ENCODE measurements at regions of chr13 and their contacts with region 1.

Region 1: DNA sequence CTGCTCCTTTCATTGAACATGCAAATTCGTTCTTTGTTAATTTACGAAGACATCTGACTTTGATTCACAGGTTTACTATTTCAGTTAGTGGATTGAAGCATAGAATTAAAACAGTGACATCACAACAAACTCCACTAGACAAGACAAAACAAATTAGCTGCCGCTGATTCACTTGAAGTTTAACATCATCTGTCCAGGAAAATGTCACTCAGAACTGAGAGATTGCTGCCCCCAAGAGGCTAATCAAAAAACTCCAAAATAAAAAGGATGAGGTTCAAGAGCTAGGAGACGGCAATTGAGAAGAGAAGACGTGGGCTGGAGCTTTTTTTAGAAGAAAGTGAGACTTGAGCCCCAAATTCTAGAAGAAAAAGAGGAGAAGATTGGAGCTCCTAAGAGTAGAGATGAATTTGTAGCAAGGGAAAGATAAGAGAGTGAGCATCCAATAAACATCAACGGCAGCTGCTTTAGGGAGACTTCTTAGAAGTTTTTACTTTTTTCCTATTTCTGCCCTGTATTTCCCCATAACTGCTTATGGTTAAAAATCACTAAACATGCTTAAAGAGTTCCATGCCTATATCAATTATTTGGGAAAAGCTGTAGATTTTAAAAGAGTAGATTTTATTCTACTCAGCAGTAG is 40.8 kb upstream of the TPP2 start:
- DNase-seq: peak; percentile 47
- H3K4me3 ChIP-seq: no peak overlapping the region
- H3K27ac ChIP-seq: peak overlapping the region in 1 of 2 experiments; percentile 55; a peak in 2 of 4 replicates
- H3K4me1 ChIP-seq: peaks cover 0 to 2% of the 10 kb centered on the region in 2 experiments; a peak in 2 of 4 replicates
- H3K27me3 ChIP-seq: no peaks in the 10 kb centered on the region
- CTCF ChIP-seq: peak; percentile 64
- EP300 ChIP-seq: no peak
- RAD21 ChIP-seq: peak; percentile 92

Region 2: DNA sequence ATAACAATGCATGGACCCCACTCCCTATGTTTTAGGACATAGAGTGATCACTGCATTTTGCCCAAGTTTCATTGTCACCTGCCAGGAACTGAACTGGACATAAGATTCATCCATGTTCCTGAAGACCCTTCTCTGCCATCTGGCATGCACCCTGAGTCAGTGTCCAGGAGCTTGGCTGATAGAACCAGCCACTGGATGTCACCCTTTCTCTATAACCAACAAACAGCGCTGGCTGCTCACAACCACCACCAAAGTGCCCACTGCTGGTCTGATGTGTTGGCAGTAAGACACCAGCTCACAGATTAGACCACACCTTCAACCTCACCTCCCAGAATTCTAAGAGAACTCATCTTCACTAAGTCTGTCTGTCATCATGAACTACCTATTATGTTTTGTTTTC is 770.2 kb before region 1 on chr13:
- CTCF ChIA-PET with region 1: interaction called, 10 read pairs
- POLR2A ChIA-PET with region 1: no interaction called
- DNase-seq: peak; percentile 22
- H3K4me3 ChIP-seq: no peak overlapping the region
- H3K27ac ChIP-seq: no peak overlapping the region
- H3K4me1 ChIP-seq: peaks cover 0 to 17% of the 10 kb centered on the region in 2 experiments; a peak in 2 of 4 replicates
- H3K27me3 ChIP-seq: no peaks in the 10 kb centered on the region
- CTCF ChIP-seq: peak; percentile 56
- EP300 ChIP-seq: no peak
- RAD21 ChIP-seq: peak; percentile 75

Region 3: DNA sequence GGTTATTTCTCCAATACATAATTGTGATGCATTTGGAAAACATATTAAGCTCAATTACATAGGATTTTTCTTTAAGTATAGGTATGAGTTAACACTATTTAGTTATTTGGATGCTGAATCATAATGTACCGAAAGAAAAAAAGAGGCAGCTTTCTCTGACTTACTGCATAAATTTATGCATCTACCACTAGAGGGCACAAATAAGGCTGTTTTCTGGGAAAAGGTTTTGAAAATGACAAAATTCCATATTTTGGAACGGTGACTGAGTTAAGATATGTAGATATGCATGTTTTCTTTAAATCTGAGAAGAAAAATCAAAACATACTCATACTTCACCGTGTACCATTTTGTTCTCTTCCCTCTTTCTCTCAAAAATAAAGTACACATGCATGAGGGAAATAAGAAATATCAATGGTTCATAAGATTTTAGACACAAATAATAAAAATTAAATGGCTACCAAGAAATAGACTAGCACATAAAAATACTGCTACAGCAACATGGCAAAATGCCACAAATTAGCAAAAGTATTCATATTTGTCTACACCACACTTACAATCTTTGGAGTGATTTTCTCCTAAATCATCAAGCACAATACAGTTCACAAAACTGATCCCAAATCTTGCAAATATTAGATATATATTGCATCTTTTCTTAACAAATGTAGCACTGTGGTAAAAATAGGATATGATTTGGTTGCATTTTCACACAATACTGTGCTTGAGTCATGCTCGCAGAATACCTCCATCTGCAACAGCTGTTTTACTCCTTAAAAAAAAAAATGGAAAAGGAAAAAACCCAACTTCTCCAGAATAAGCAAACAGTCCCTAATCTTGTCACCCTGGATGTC is 414.2 kb before region 1 on chr13:
- CTCF ChIA-PET with region 1: interaction called, 29 read pairs
- POLR2A ChIA-PET with region 1: no interaction called
- DNase-seq: no peak
- H3K4me3 ChIP-seq: no peak overlapping the region
- H3K27ac ChIP-seq: peak overlapping the region in 1 of 2 experiments; percentile 99; a peak in 2 of 4 replicates
- H3K4me1 ChIP-seq: peaks cover 0 to 40% of the 10 kb centered on the region in 2 experiments; a peak in 3 of 4 replicates
- H3K27me3 ChIP-seq: no peaks in the 10 kb centered on the region
- CTCF ChIP-seq: peak; percentile 92
- EP300 ChIP-seq: no peak
- RAD21 ChIP-seq: peak; percentile 74

Region 4: GRCh38 chr13:102394158-102395053 is 161.6 kb before region 1 on chr13:
- CTCF ChIA-PET with region 1: interaction called, 67 read pairs
- POLR2A ChIA-PET with region 1: interaction called, 19 read pairs
- DNase-seq: peak; percentile 95
- H3K4me3 ChIP-seq: peak overlapping the region; percentile 75 to 86
- H3K27ac ChIP-seq: peak overlapping the region; percentile 25 to 96; a peak in 3 of 4 replicates
- H3K4me1 ChIP-seq: peaks cover 0 to 41% of the 10 kb centered on the region in 2 experiments; a peak in 2 of 4 replicates
- H3K27me3 ChIP-seq: no peaks in the 10 kb centered on the region
- CTCF ChIP-seq: peak; percentile 46
- EP300 ChIP-seq: peak; percentile 3 to 24; a peak in 1 of 4 replicates
- RAD21 ChIP-seq: peak; percentile 64

Region 5: GRCh38 chr13:102402290-102402689 is 153.7 kb before region 1 on chr13:
- CTCF ChIA-PET with region 1: interaction called, 67 read pairs
- POLR2A ChIA-PET with region 1: interaction called, 19 read pairs
- DNase-seq: peak; percentile 88
- H3K4me3 ChIP-seq: peak overlapping the region; percentile 67 to 83
- H3K27ac ChIP-seq: peak overlapping the region in 1 of 2 experiments; percentile 96; a peak in 2 of 4 replicates
- H3K4me1 ChIP-seq: peaks cover 0 to under 1% of the 10 kb centered on the region in 2 experiments; a peak in 2 of 4 replicates
- H3K27me3 ChIP-seq: no peaks in the 10 kb centered on the region
- CTCF ChIP-seq: peak; percentile 30
- EP300 ChIP-seq: no peak; a peak in 1 of 4 replicates
- RAD21 ChIP-seq: peak; percentile 62

Region 6: GRCh38 chr13:102536695-102537485 is 19.1 kb before region 1 on chr13:
- CTCF ChIA-PET with region 1: interaction called, 11 read pairs
- POLR2A ChIA-PET with region 1: no interaction called
- DNase-seq: no peak
- H3K4me3 ChIP-seq: no peak overlapping the region
- H3K27ac ChIP-seq: no peak overlapping the region; a peak in 1 of 4 replicates
- H3K4me1 ChIP-seq: peaks cover 0 to 2% of the 10 kb centered on the region in 2 experiments; a peak in 1 of 4 replicates
- H3K27me3 ChIP-seq: no peaks in the 10 kb centered on the region
- CTCF ChIP-seq: no peak
- EP300 ChIP-seq: no peak
- RAD21 ChIP-seq: no peak

Region 7: GRCh38 chr13:102571075-102571474 is 15.0 kb after region 1 on chr13:
- CTCF ChIA-PET with region 1: interaction called, 26 read pairs
- POLR2A ChIA-PET with region 1: interaction called, 3 read pairs
- DNase-seq: peak; percentile 37
- H3K4me3 ChIP-seq: no peak overlapping the region
- H3K27ac ChIP-seq: no peak overlapping the region
- H3K4me1 ChIP-seq: peaks cover 0 to 12% of the 10 kb centered on the region in 2 experiments; a peak in 2 of 4 replicates
- H3K27me3 ChIP-seq: 0 out of 2 replicates have a peak, but pooled peaks cover 5% of the 10 kb centered on the region
- CTCF ChIP-seq: no peak
- EP300 ChIP-seq: no peak
- RAD21 ChIP-seq: peak; percentile 73